HepG2 (cell line): ENCODE measurements at regions of chr2 and their contacts with region 1.

Region 1: GRCh38 chr2:224145751-224146355 is 106.8 kb upstream of the SERPINE2 start:
- DNase-seq: peak; percentile 98
- ATAC-seq: peak; percentile 83
- H3K4me3 ChIP-seq: peak overlapping the region in 1 of 3 experiments; percentile 36; a peak in 2 of 6 replicates
- H3K27ac ChIP-seq: peak overlapping the region; percentile 93
- H3K4me1 ChIP-seq: peaks cover 84% of the 10 kb centered on the region
- H3K27me3 ChIP-seq: no peaks in the 10 kb centered on the region
- CTCF ChIP-seq: no peak
- EP300 ChIP-seq: peak; percentile 71 to 95; a peak in 3 of 4 replicates
- POLR2A ChIP-seq: no peak
- RAD21 ChIP-seq: no peak

Region 2: DNA sequence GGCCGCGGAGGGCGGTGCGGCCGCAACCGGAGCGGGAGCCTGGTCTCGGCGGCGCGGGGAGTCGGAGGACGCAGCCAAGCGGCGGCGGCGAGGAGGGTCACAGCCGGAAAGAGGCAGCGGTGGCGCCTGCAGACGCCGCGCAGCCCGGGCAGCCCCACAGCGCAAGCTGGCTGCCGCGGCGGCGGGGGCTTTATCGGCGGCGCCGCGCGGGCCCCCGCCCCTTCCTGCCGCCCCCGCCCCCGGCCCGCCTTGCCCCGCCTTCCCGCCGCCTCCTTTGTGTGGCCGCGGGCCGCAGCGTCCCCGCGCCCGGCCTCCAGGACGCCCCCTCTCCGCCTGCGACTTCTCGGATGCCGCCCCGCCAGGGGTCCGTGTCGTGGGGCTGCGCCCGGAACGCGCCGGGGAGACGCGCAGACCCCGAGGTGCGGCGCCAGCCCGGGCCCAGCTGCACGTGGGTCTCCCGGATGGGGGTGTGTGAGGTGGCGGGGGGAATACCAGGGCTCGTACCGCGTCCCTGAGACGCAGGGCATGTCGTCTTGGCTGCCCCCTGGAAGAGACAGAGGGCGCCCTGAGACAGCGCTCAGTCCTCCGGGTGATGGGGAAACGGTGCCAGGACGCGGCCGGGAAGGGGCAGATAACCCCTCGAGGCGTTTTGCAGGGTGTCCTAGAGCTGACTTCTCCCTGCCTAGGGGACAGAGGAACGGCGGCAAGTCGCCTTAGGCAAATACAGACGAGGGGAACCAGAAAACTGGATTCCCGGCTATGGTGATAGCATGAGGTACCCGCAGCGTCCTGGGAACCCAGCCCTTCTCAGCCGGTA is 106.5 kb before region 1 on chr2 and contains the start of gene SERPINE2:
- CTCF ChIA-PET with region 1: no interaction called
- POLR2A ChIA-PET with region 1: interaction called, 3 read pairs
- in situ Hi-C with region 1: no loop called
- intact Hi-C with region 1: loop called (anchors 1 kb)
- DNase-seq: no peak
- ATAC-seq: peak; percentile 72
- H3K4me3 ChIP-seq: peak within 1 kb of the TSS; percentile 69 to 84 (median 77)
- H3K27ac ChIP-seq: no peak within 1 kb of the TSS
- H3K4me1 ChIP-seq: peaks cover 32% of the 10 kb centered on the region
- H3K27me3 ChIP-seq: peaks cover 3 to 54% of the 10 kb centered on the region in 2 experiments; a peak in 4 of 5 replicates
- CTCF ChIP-seq: peak; percentile 93
- EP300 ChIP-seq: no peak
- POLR2A ChIP-seq: no peak
- RAD21 ChIP-seq: peak; percentile 47
- total RNA-seq, gene SERPINE2: 5.5 and 7.9 TPM in 2 replicates

Region 3: DNA sequence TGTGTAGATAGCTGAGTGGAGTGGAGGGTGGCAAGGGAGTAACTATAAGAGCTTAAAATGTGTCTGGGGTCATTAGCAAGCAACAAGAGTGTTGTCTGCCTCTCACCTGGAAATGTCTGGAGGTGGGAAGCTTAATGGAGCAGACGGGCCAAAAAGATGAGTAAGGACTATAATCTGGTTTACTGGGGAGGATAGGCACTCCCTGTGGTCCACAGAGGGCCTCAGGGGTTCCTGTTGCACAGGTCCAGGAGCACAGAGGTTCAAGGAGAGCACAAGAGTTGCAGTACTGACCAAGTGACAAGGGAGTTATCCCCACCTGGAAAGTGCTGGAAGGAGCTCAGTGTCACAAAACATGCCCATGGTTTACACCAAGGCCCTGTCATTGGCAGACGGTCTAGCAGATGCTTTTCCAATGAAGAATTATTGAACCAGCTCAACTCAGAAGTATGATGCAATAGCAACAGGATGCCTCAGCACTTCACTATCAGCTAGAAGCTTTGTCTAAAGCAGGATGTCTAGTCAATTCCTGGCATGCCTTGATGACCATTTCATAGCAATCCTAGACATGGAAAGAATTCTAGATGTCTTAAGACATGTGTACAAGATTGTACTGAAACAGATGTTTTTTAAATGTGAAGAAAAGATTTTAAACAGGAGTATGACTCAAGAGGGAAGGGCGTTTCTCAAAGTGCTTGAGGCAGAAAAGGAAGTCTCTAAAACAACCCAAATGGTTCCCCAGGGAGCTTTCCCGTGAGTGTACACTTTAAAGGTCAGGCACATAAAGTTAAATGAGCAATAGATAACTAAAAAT is 43.8 kb before region 1 on chr2:
- CTCF ChIA-PET with region 1: no interaction called
- POLR2A ChIA-PET with region 1: interaction called, 5 read pairs
- in situ Hi-C with region 1: no loop called
- intact Hi-C with region 1: loop called (anchors 1 kb)
- DNase-seq: no peak
- ATAC-seq: no peak
- H3K4me3 ChIP-seq: no peak overlapping the region
- H3K27ac ChIP-seq: no peak overlapping the region
- H3K4me1 ChIP-seq: peaks cover 49% of the 10 kb centered on the region
- H3K27me3 ChIP-seq: peaks cover 0 to 2% of the 10 kb centered on the region in 2 experiments; a peak in 1 of 5 replicates
- CTCF ChIP-seq: no peak
- EP300 ChIP-seq: no peak
- POLR2A ChIP-seq: no peak
- RAD21 ChIP-seq: no peak

Region 4: GRCh38 chr2:224155896-224156295 is 10.0 kb after region 1 on chr2:
- CTCF ChIA-PET with region 1: no interaction called
- POLR2A ChIA-PET with region 1: interaction called, 22 read pairs
- in situ Hi-C with region 1: no loop called
- intact Hi-C with region 1: no loop called
- DNase-seq: no peak
- ATAC-seq: no peak
- H3K4me3 ChIP-seq: no peak overlapping the region
- H3K27ac ChIP-seq: no peak overlapping the region
- H3K4me1 ChIP-seq: peaks cover 24% of the 10 kb centered on the region
- H3K27me3 ChIP-seq: peaks cover 0 to 23% of the 10 kb centered on the region in 2 experiments; a peak in 2 of 5 replicates
- CTCF ChIP-seq: no peak
- EP300 ChIP-seq: no peak
- POLR2A ChIP-seq: no peak
- RAD21 ChIP-seq: no peak

Region 5: GRCh38 chr2:224272237-224272910 is 126.5 kb after region 1 on chr2:
- CTCF ChIA-PET with region 1: no interaction called
- POLR2A ChIA-PET with region 1: interaction called, 7 read pairs
- in situ Hi-C with region 1: no loop called
- intact Hi-C with region 1: loop called (anchors 2 kb)
- DNase-seq: peak; percentile 73
- ATAC-seq: peak; percentile 80
- H3K4me3 ChIP-seq: no peak overlapping the region
- H3K27ac ChIP-seq: no peak overlapping the region
- H3K4me1 ChIP-seq: peaks cover 49% of the 10 kb centered on the region
- H3K27me3 ChIP-seq: no peaks in the 10 kb centered on the region
- CTCF ChIP-seq: no peak
- EP300 ChIP-seq: peak in 1 of 2 experiments; percentile 92; a peak in 2 of 4 replicates
- POLR2A ChIP-seq: no peak
- RAD21 ChIP-seq: no peak

Region 6: DNA sequence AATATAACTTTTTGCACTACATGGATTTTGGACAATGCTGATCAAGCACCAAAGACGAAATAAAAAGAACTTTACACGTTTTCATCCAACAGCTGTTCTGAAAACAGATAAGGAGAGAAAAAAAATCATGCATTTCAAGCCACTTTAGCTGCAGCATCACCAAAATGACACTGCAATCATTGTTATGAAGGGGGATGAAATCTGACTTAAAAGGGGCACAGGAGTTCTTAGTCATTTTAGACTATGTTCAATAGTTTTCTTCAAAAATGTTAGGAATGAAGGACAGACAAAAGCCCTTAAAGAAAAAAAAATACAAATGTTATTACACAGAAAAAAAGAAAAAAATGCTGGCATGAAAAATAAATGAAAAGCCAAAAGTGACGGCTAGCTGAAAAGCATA is 368.1 kb after region 1 on chr2:
- CTCF ChIA-PET with region 1: no interaction called
- POLR2A ChIA-PET with region 1: no interaction called
- in situ Hi-C with region 1: no loop called
- intact Hi-C with region 1: no loop called
- DNase-seq: no peak
- ATAC-seq: no peak
- H3K4me3 ChIP-seq: no peak overlapping the region
- H3K27ac ChIP-seq: no peak overlapping the region
- H3K4me1 ChIP-seq: 0 out of 2 replicates have a peak, but pooled peaks cover 5% of the 10 kb centered on the region
- H3K27me3 ChIP-seq: no peaks in the 10 kb centered on the region
- CTCF ChIP-seq: no peak
- EP300 ChIP-seq: no peak
- POLR2A ChIP-seq: no peak
- RAD21 ChIP-seq: no peak